ENCODE measurements at regions of chr10 and their contacts with region 1.

Region 1: GRCh38 chr10:102231357-102232318 is 5.5 kb downstream of the ELOVL3 start:
- DNase-seq: peak; percentile 75
- H3K4me3 Mint-ChIP-seq: peak overlapping the region; percentile 73
- H3K27ac Mint-ChIP-seq: no peak overlapping the region
- H3K4me1 Mint-ChIP-seq: peaks cover 16% of the 10 kb centered on the region
- H3K27me3 Mint-ChIP-seq: peaks cover 55% of the 10 kb centered on the region

Region 2: DNA sequence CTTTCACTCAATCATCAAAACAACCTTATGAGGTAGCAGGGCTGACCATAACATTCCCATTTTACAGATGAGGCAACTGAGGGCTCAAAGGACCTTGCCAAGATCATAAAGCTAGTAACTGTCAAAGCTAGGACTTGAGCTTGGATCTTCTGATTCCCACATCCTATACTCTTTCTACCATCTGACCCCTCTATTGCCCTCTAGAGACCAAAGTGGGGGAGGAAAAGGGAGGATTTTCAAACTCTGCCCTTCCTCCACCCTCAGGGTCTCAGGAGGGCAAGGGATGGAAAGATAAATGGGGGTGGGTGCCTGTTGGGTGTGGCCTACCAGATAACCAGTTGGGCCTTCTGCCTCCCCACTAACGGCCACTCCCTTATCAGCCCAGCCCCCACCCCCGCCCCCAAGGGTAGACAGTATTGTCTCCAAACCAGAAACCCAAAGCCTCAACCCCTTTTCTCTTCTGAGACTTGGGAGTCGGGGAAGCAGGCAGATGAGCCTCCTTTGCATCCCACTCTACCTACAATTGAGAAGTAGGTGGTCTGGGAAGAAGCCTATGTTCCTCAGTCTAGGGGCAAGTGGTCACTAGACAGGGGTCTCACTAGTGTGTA is 119.3 kb before region 1 on chr10:
- CTCF ChIA-PET with region 1: no interaction called
- POLR2A ChIA-PET with region 1: no interaction called
- DNase-seq: no peak
- H3K4me3 Mint-ChIP-seq: peak overlapping the region; percentile 76
- H3K27ac Mint-ChIP-seq: no peak overlapping the region
- H3K4me1 Mint-ChIP-seq: peaks cover 44% of the 10 kb centered on the region
- H3K27me3 Mint-ChIP-seq: no peaks in the 10 kb centered on the region

Region 3: GRCh38 chr10:102245101-102245931 is 13.7 kb after region 1 on chr10 and contains the start of gene GBF1:
- CTCF ChIA-PET with region 1: interaction called, 105 read pairs
- POLR2A ChIA-PET with region 1: interaction called, 16 read pairs
- DNase-seq: peak; percentile 94
- H3K4me3 Mint-ChIP-seq: peak within 1 kb of the TSS; percentile 99
- H3K27ac Mint-ChIP-seq: peak within 1 kb of the TSS; percentile 89
- H3K4me1 Mint-ChIP-seq: peaks cover 57% of the 10 kb centered on the region
- H3K27me3 Mint-ChIP-seq: peaks cover 14% of the 10 kb centered on the region
- total RNA-seq, gene GBF1: 42.4 to 43.1 TPM

Region 4: DNA sequence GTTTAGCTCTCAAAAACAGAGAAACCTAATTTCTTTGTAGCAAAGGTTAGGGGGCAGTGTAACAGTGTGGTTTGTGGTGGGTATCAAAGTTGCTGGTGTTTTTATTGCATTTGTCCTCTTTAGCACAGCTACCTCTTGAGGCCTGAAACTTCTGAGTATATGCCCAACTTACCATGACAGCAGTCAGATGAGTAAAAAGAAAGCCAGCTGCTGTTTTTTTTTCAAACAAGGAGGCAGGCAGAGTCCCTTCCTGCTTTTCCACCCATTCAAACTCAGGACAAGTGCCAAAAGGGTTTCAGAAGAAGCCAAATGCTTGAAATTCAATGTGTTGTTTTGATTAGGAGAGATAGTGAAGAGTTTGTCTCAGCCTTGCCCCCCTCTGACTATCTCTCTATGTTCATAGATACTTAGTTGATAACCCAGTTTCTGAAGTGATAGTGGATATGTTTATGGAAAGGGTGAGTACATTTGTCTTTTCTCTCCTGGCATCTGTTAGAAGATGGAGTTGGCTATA is 36.8 kb after region 1 on chr10:
- CTCF ChIA-PET with region 1: interaction called, 20 read pairs
- POLR2A ChIA-PET with region 1: no interaction called
- DNase-seq: no peak
- H3K4me3 Mint-ChIP-seq: no peak overlapping the region
- H3K27ac Mint-ChIP-seq: peak overlapping the region; percentile 45
- H3K4me1 Mint-ChIP-seq: peaks cover 41% of the 10 kb centered on the region
- H3K27me3 Mint-ChIP-seq: no peaks in the 10 kb centered on the region

Region 5: GRCh38 chr10:102368072-102368471 is 136.4 kb after region 1 on chr10:
- CTCF ChIA-PET with region 1: interaction called, 12 read pairs
- POLR2A ChIA-PET with region 1: interaction called, 3 read pairs
- DNase-seq: no peak
- H3K4me3 Mint-ChIP-seq: no peak overlapping the region
- H3K27ac Mint-ChIP-seq: no peak overlapping the region
- H3K4me1 Mint-ChIP-seq: no peaks in the 10 kb centered on the region
- H3K27me3 Mint-ChIP-seq: no peaks in the 10 kb centered on the region